BJ (cell line): ENCODE measurements at regions of chr19 and their contacts with region 1.

Region 1: GRCh38 chr19:1825909-1826556 is 14.0 kb upstream of the ATP8B3 start:
- DNase-seq: no peak
- H3K4me3 ChIP-seq: no peak overlapping the region
- H3K27me3 ChIP-seq: no peaks in the 10 kb centered on the region
- CTCF ChIP-seq: peak; percentile 93

Region 2: GRCh38 chr19:1812469-1813196 is 13.4 kb before region 1 on chr19:
- CTCF ChIA-PET with region 1: interaction called, 18 read pairs
- POLR2A ChIA-PET with region 1: no interaction called
- DNase-seq: peak; percentile 75
- H3K4me3 ChIP-seq: peak overlapping the region; percentile 80
- H3K27me3 ChIP-seq: no peaks in the 10 kb centered on the region
- CTCF ChIP-seq: peak; percentile 64